ENCODE measurements at regions of chr1 and their contacts with region 1.

Region 1: DNA sequence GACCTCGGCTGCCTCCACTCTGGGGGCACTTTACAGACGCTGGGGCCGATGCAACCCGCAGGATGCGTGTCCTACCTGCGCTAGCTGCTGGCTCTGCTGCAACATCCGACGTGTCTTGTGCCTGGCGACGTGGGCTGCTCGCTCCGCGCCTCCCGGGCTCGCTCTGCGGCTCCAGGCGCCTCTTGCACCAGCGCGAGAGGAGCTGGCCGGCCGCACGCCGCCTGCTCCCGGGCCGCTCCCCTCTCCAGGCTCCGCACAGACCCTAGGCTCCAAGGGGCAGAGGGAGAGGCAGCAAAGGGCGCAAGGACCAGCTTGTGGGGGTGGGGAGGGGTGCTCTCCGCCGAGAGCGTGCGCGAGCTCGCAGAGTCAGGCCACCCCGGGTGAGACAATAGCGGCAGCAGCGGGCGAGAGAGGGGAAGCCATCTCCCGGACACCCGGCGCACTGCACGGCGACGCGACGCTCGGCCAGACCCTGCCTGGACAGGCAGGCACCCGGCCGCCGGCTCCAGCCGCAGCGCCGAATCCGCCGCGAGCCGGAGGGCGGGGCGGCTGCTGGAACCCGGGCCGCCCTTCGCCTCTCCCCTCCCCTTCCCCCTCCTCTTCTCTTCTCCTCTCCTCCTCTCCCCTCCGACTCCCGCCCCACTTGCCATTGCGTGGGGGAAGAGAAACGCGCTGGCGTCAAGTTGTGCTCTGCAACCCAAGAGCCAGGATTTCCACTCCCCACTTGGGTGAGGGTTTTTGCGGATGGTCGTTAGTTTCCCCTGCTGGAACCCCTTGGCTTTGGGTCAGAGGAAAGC is at the start of gene PIK3C2B:
- DNase-seq: peak; percentile 84
- ATAC-seq: peak; percentile 89
- H3K4me3 Mint-ChIP-seq: peak within 1 kb of the TSS; percentile 77
- H3K27ac Mint-ChIP-seq: peak within 1 kb of the TSS; percentile 86
- H3K4me1 Mint-ChIP-seq: peaks cover 44% of the 10 kb centered on the region
- H3K27me3 Mint-ChIP-seq: no peaks in the 10 kb centered on the region
- total RNA-seq, gene PIK3C2B: 21.6 to 26.0 TPM

Region 2: GRCh38 chr1:204456826-204457442 is 37.5 kb before region 1 on chr1:
- CTCF ChIA-PET with region 1: interaction called, 918 read pairs
- DNase-seq: no peak
- ATAC-seq: no peak
- H3K4me3 Mint-ChIP-seq: no peak overlapping the region
- H3K27ac Mint-ChIP-seq: no peak overlapping the region
- H3K4me1 Mint-ChIP-seq: peaks cover 32% of the 10 kb centered on the region
- H3K27me3 Mint-ChIP-seq: no peaks in the 10 kb centered on the region

Region 3: GRCh38 chr1:204480515-204480914 is 14.0 kb before region 1 on chr1:
- CTCF ChIA-PET with region 1: interaction called, 10 read pairs
- DNase-seq: no peak
- ATAC-seq: no peak
- H3K4me3 Mint-ChIP-seq: no peak overlapping the region
- H3K27ac Mint-ChIP-seq: no peak overlapping the region
- H3K4me1 Mint-ChIP-seq: peaks cover 23% of the 10 kb centered on the region
- H3K27me3 Mint-ChIP-seq: no peaks in the 10 kb centered on the region

Region 4: DNA sequence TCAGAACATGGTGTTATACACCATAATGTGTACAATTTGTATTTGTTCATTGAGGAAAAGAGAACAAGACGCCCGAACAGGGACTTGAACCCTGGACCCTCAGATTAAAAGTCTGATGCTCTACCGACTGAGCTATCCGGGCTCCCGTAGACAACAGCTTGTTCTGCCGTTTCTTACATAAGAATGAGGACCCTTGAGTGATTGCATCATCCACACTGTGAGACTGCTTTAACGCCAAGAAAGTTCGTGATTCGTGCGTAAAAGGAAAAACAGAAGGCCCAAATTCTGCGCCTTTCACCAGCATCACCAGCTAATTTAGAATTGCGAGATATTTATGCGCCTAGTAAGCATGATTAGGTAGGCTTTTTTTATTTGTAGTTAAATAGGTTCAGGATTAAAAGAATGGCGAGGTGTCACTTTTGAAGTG is 12.5 kb after region 1 on chr1:
- CTCF ChIA-PET with region 1: interaction called, 38 read pairs
- DNase-seq: peak; percentile 93
- ATAC-seq: peak; percentile 79
- H3K4me3 Mint-ChIP-seq: peak overlapping the region; percentile 85
- H3K27ac Mint-ChIP-seq: peak overlapping the region; percentile 100
- H3K4me1 Mint-ChIP-seq: peaks cover 31% of the 10 kb centered on the region
- H3K27me3 Mint-ChIP-seq: no peaks in the 10 kb centered on the region

Region 5: DNA sequence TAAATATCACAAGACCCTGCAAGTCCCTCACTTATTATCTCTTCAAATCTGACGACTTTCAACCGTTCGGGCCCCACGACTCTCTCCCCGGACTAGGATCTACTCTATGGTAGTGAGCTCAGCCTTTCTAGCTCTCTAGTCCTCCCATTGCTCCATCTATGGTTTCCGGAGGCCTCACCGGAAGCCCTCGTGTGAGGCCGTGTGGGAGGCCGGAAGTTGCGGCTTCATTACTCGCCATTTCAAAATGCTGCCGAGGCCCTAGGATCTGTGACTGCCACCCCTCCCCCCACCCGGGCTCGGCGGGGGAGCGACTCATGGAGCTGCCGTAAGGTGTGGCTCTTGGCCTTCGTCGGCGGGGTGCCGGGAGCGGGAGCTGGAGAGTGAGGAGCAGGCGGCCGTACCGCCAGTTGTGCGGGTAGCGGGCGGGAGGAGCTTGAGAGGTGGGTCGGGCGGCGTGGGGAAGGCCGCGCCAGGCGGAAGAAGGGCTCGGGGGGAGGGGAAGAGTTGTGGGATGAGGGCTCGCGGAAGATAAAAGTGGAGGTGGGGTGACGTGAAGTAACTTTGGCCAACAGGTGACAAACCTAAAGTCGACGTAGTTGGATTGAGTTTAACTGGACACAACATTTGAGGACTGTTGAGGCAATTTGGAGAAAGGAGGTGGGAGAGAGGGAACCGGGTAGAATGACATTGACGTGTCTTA is 21.9 kb after region 1 on chr1 and contains the start of gene MDM4:
- CTCF ChIA-PET with region 1: interaction called, 17 read pairs
- DNase-seq: peak; percentile 97
- ATAC-seq: peak; percentile 87
- H3K4me3 Mint-ChIP-seq: no peak within 1 kb of the TSS
- H3K27ac Mint-ChIP-seq: peak within 1 kb of the TSS; percentile 52
- H3K4me1 Mint-ChIP-seq: peaks cover 56% of the 10 kb centered on the region
- H3K27me3 Mint-ChIP-seq: no peaks in the 10 kb centered on the region
- total RNA-seq, gene MDM4: 74.7 to 100.0 TPM